PC-3 (cell line): ENCODE measurements at regions of chr1 and their contacts with region 1.

Region 1: GRCh38 chr1:202796302-202797069 is 11.7 kb downstream of the KDM5B start:
- DNase-seq: no peak
- ATAC-seq: no peak
- H3K4me3 ChIP-seq: no peak overlapping the region
- H3K27ac ChIP-seq: no peak overlapping the region
- H3K4me1 ChIP-seq: no peaks in the 10 kb centered on the region
- H3K27me3 ChIP-seq: no peaks in the 10 kb centered on the region
- CTCF ChIP-seq: no peak

Region 2: GRCh38 chr1:201229771-201230635 is 1566.5 kb before region 1 on chr1:
- CTCF ChIA-PET with region 1: no interaction called
- POLR2A ChIA-PET with region 1: no interaction called
- intact Hi-C with region 1: no loop called
- DNase-seq: peak; percentile 99
- ATAC-seq: peak; percentile 92
- H3K4me3 ChIP-seq: peak overlapping the region; percentile 3; the same call in 1 of the 2 replicates
- H3K27ac ChIP-seq: peak overlapping the region; percentile 54
- H3K4me1 ChIP-seq: peaks cover 21% of the 10 kb centered on the region
- H3K27me3 ChIP-seq: no peaks in the 10 kb centered on the region
- CTCF ChIP-seq: peak; percentile 91

Region 3: GRCh38 chr1:202871366-202871765 is 74.9 kb after region 1 on chr1:
- CTCF ChIA-PET with region 1: no interaction called
- POLR2A ChIA-PET with region 1: interaction called, 10 read pairs
- intact Hi-C with region 1: no loop called
- DNase-seq: peak; percentile 36
- ATAC-seq: 0 out of 2 replicates have a peak, but pooled peaks have one; percentile 18
- H3K4me3 ChIP-seq: no peak overlapping the region
- H3K27ac ChIP-seq: no peak overlapping the region
- H3K4me1 ChIP-seq: peaks cover 3% of the 10 kb centered on the region; the same call in 1 of the 2 replicates
- H3K27me3 ChIP-seq: no peaks in the 10 kb centered on the region
- CTCF ChIP-seq: no peak